Heart right ventricle (tissue), 16 donors: ENCODE measurements at regions of chr11 and their contacts with region 1.

Region 1: DNA sequence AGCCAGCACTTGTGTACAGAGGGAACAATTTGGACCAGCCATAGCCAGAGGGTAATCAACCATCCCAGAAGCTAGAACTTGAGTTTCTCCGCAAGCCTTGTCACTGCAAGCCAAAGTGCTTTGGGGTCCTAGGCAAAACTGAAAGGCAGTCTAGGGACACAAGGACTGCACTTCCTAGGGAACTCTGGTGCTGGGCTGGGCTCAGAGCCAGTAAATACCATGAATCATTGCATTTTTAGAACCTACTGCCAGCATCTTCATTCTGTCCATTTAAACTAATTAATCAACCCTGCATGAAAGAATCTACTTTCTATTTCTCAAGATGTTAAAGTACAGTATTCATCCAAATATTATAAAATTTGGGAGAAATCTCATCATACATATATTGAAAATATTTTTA is 20.0 kb downstream of the PATE3 start:
- DNase-seq: no peak
- ATAC-seq: no peak
- H3K4me3 ChIP-seq: no peak overlapping the region
- H3K27ac ChIP-seq: no peak overlapping the region
- H3K4me1 ChIP-seq: no peaks in the 10 kb centered on the region
- H3K27me3 ChIP-seq: no peaks in the 10 kb centered on the region
- CTCF ChIP-seq: no peak

Region 2: GRCh38 chr11:126790550-126791081 is 982.7 kb after region 1 on chr11:
- intact Hi-C with region 1: loop called in 1 of 10 experiments (anchors 5 kb)
- DNase-seq: no peak
- ATAC-seq: peak in 1 of 8 donors; percentile 25
- H3K4me3 ChIP-seq: no peak overlapping the region
- H3K27ac ChIP-seq: no peak overlapping the region
- H3K4me1 ChIP-seq: no peaks in the 10 kb centered on the region
- H3K27me3 ChIP-seq: peaks cover 0 to 36% (median 4%) of the 10 kb centered on the region in 7 donors
- CTCF ChIP-seq: no peak